GM12878 (cell line): ENCODE measurements at regions of chr3 and their contacts with region 1.

Region 1: GRCh38 chr3:79019137-79019923 is 748.5 kb downstream of the ROBO1 start:
- DNase-seq: no peak
- ATAC-seq: peak; percentile 88
- H3K4me3 ChIP-seq: peak overlapping the region; percentile 27; the same call in 1 of the 2 replicates
- H3K27ac ChIP-seq: peak overlapping the region; percentile 69
- H3K4me1 ChIP-seq: no peaks in the 10 kb centered on the region
- H3K27me3 ChIP-seq: no peaks in the 10 kb centered on the region
- CTCF ChIP-seq: no peak
- EP300 ChIP-seq: no peak
- POLR2A ChIP-seq: 0 out of 2 replicates have a peak, but pooled peaks have one; percentile 37
- RAD21 ChIP-seq: no peak

Region 2: GRCh38 chr3:78666470-78666800 is 352.9 kb before region 1 on chr3:
- CTCF ChIA-PET with region 1: interaction called, 4 read pairs
- POLR2A ChIA-PET with region 1: no interaction called
- RAD21 ChIA-PET with region 1: interaction called, 7 read pairs
- SMC1A ChIA-PET with region 1: interaction called, 15 read pairs
- in situ Hi-C with region 1: no loop called
- intact Hi-C with region 1: no loop called
- DNase-seq: no peak
- ATAC-seq: no peak
- H3K4me3 ChIP-seq: no peak overlapping the region
- H3K27ac ChIP-seq: no peak overlapping the region
- H3K4me1 ChIP-seq: no peaks in the 10 kb centered on the region
- H3K27me3 ChIP-seq: no peaks in the 10 kb centered on the region
- CTCF ChIP-seq: no peak
- EP300 ChIP-seq: no peak
- POLR2A ChIP-seq: no peak
- RAD21 ChIP-seq: no peak

Region 3: DNA sequence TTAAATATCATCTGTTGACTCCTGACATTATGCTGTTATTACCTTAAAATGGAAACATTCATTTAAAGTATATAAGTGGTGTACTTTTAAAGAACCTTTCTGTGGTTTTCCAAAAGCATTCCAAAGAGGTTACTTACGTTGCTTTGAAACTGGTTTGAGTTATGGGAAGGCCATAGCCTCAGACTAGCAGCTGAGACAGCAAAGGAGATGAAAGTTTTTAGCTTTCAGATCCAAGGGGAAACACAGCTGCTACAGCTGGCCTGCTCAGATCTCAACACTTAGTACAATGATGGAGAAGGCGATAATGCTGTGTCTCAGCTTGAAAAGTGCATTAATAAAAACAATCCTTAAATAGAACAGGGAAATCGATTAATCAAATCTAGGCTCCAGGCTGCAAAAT is 172.6 kb before region 1 on chr3:
- CTCF ChIA-PET with region 1: no interaction called
- POLR2A ChIA-PET with region 1: no interaction called
- RAD21 ChIA-PET with region 1: interaction called, 11 read pairs
- SMC1A ChIA-PET with region 1: interaction called, 3 read pairs
- in situ Hi-C with region 1: no loop called
- intact Hi-C with region 1: no loop called
- DNase-seq: no peak
- ATAC-seq: no peak
- H3K4me3 ChIP-seq: no peak overlapping the region
- H3K27ac ChIP-seq: no peak overlapping the region
- H3K4me1 ChIP-seq: no peaks in the 10 kb centered on the region
- H3K27me3 ChIP-seq: no peaks in the 10 kb centered on the region
- CTCF ChIP-seq: no peak
- EP300 ChIP-seq: no peak
- POLR2A ChIP-seq: no peak
- RAD21 ChIP-seq: no peak

Region 4: DNA sequence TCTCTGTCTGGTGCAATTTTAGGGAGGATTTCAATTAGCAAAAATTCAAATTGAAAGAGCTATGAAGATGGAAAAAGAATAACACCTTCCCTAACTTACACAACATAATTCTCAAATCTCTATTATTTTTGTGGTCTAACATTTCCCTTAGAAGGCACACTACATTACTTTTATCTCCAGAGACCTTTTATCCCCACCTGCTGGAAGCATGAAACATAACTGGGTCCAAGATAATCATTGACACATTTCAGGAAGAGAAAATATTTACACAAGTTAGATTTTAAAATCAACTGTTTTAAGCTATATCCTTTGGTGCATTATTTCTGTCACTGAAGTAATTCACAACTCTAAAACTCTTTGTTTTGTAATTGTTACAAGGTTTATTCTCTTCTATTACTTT is 31.0 kb before region 1 on chr3:
- CTCF ChIA-PET with region 1: interaction called, 10 read pairs
- POLR2A ChIA-PET with region 1: interaction called, 10 read pairs
- RAD21 ChIA-PET with region 1: interaction called, 75 read pairs
- SMC1A ChIA-PET with region 1: interaction called, 32 read pairs
- in situ Hi-C with region 1: no loop called
- intact Hi-C with region 1: no loop called
- DNase-seq: no peak
- ATAC-seq: no peak
- H3K4me3 ChIP-seq: no peak overlapping the region
- H3K27ac ChIP-seq: no peak overlapping the region
- H3K4me1 ChIP-seq: no peaks in the 10 kb centered on the region
- H3K27me3 ChIP-seq: no peaks in the 10 kb centered on the region
- CTCF ChIP-seq: peak in 1 of 3 experiments; percentile 32; a peak in 1 of 6 replicates
- EP300 ChIP-seq: no peak
- POLR2A ChIP-seq: no peak
- RAD21 ChIP-seq: peak; percentile 23

Region 5: GRCh38 chr3:79032686-79033318 is 13.5 kb after region 1 on chr3:
- CTCF ChIA-PET with region 1: interaction called, 20 read pairs
- POLR2A ChIA-PET with region 1: interaction called, 4 read pairs
- RAD21 ChIA-PET with region 1: interaction called, 10 read pairs
- SMC1A ChIA-PET with region 1: interaction called, 16 read pairs
- in situ Hi-C with region 1: no loop called
- intact Hi-C with region 1: no loop called
- DNase-seq: no peak
- ATAC-seq: peak; percentile 78
- H3K4me3 ChIP-seq: no peak overlapping the region
- H3K27ac ChIP-seq: no peak overlapping the region
- H3K4me1 ChIP-seq: no peaks in the 10 kb centered on the region
- H3K27me3 ChIP-seq: no peaks in the 10 kb centered on the region
- CTCF ChIP-seq: peak; percentile 35 to 59 (median 35); a peak in 5 of 6 replicates
- EP300 ChIP-seq: no peak
- POLR2A ChIP-seq: no peak
- RAD21 ChIP-seq: peak; percentile 77